HepG2 (cell line): ENCODE measurements at regions of chr2 and their contacts with region 1.

Region 1: DNA sequence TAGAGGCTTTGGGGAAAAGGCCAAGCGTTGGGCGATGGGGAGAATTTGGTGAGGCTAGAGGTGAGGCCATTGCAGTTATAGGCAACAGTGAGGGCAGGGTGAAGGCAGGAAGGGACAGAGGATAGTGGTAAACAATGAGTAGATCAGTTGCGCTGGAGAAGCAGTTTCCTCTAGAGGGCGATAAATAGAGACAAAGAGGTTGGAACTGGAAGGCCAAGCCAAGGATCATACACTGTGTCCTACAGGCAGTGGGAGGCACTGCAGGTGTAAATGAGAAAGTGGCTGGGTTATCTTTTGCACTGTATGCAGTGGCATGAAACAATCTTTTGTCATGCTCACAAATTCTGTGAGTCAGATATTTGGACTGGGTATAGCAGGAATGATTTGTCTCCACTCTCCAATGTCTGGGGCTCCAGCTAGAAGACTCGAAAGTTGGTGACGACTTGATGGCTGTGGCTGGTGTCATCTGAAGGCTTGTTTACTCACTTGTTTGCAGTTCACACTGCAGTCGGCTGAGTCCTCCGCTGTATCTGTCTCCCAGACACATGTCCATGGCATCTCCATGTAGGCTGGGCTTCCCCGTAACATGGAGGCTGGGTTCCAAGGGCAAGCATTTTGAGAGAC is 82.1 kb downstream of the TNP1 start:
- DNase-seq: peak; percentile 89
- ATAC-seq: peak; percentile 98
- H3K4me3 ChIP-seq: no peak overlapping the region
- H3K27ac ChIP-seq: no peak overlapping the region
- H3K4me1 ChIP-seq: peaks cover 16% of the 10 kb centered on the region
- H3K27me3 ChIP-seq: peaks cover 0 to 16% of the 10 kb centered on the region in 2 experiments; a peak in 2 of 5 replicates
- CTCF ChIP-seq: peak; percentile 88
- EP300 ChIP-seq: peak in 1 of 2 experiments; percentile 42; a peak in 1 of 4 replicates
- POLR2A ChIP-seq: no peak
- RAD21 ChIP-seq: peak; percentile 87

Region 2: DNA sequence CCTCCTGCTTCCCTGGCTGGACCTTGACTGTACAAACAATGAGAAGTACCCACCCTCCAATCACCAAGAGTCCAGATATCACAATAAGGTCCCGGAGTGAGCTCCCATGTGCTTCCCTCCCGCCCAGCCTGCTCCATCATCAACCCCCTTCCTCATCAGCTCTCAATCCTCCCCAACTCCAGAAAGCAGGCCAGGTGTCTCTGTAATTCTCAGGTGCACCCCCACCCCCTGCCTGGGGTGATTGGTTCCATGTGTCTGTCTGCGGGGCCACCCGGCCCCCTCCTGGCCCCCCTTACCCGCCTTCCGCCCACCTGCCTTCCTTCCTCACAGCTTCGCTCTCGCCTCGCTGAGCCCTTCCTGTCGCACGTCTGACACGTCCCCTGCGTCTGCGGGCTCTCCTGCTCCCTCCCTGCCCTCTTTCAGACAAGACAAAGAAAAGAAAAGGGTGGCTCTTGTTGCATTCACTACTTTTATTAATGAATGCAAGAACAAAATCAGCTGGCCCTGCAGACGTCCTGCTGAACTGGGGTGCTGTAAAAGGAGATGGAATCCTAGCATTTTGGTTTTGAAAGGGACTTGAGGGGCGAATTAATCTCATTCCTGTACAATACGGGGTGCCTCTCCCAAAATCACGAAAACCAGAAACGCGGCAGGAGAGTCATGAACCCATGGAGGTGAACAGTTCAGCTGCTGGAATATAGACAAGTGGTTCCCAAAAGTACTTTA is 171.0 kb before region 1 on chr2:
- CTCF ChIA-PET with region 1: no interaction called
- POLR2A ChIA-PET with region 1: no interaction called
- in situ Hi-C with region 1: no loop called
- intact Hi-C with region 1: no loop called
- DNase-seq: no peak
- ATAC-seq: peak; percentile 55; the same call in 2 of the 3 replicates
- H3K4me3 ChIP-seq: no peak overlapping the region
- H3K27ac ChIP-seq: no peak overlapping the region
- H3K4me1 ChIP-seq: peaks cover 18% of the 10 kb centered on the region
- H3K27me3 ChIP-seq: peaks cover 0 to 54% of the 10 kb centered on the region in 2 experiments; a peak in 3 of 5 replicates
- CTCF ChIP-seq: no peak
- EP300 ChIP-seq: no peak
- POLR2A ChIP-seq: no peak
- RAD21 ChIP-seq: no peak

Region 3: GRCh38 chr2:216651351-216651881 is 126.3 kb before region 1 on chr2:
- CTCF ChIA-PET with region 1: no interaction called
- POLR2A ChIA-PET with region 1: no interaction called
- in situ Hi-C with region 1: no loop called
- intact Hi-C with region 1: no loop called
- DNase-seq: no peak
- ATAC-seq: no peak
- H3K4me3 ChIP-seq: no peak overlapping the region
- H3K27ac ChIP-seq: no peak overlapping the region
- H3K4me1 ChIP-seq: peaks cover 56% of the 10 kb centered on the region
- H3K27me3 ChIP-seq: peaks cover 0 to under 1% of the 10 kb centered on the region in 2 experiments; a peak in 1 of 5 replicates
- CTCF ChIP-seq: no peak
- EP300 ChIP-seq: no peak
- POLR2A ChIP-seq: no peak
- RAD21 ChIP-seq: no peak

Region 4: GRCh38 chr2:216799873-216800431 is 22.2 kb after region 1 on chr2:
- CTCF ChIA-PET with region 1: no interaction called
- POLR2A ChIA-PET with region 1: no interaction called
- in situ Hi-C with region 1: no loop called
- intact Hi-C with region 1: no loop called
- DNase-seq: no peak
- ATAC-seq: no peak
- H3K4me3 ChIP-seq: no peak overlapping the region
- H3K27ac ChIP-seq: no peak overlapping the region
- H3K4me1 ChIP-seq: no peaks in the 10 kb centered on the region
- H3K27me3 ChIP-seq: 0 out of 5 replicates have a peak, but pooled peaks cover 0 to 5% of the 10 kb centered on the region in 2 experiments
- CTCF ChIP-seq: no peak
- EP300 ChIP-seq: no peak
- POLR2A ChIP-seq: no peak
- RAD21 ChIP-seq: no peak

Region 5: DNA sequence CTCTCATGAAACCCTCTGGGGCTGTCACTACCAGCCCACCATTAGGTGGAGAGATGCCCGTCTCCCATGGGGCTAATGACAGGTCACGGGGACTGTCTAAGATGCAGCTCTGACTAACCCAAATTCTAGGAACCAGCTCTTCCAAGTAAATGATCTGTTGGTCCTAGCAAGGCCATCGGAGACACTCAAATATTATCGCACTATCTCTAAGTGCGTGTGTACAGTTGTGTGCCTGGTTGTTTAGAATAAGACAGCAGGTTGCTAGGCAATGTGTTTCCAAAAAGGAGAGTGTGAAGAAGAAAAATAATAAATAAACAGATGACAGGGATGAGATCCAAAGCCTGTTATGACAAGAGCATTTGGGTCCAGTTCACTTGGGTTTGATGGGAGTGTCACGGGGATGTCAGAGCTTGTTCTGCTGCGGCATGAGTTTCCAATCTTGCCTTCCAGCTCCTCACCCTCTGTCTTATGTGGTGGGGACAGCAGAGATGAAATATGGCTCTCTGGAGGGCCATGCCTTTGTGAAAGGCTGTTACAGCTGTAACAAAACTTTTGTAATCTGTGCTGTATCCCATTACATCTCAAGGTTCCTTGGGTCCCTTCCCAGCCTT is 209.5 kb after region 1 on chr2:
- CTCF ChIA-PET with region 1: no interaction called
- POLR2A ChIA-PET with region 1: no interaction called
- in situ Hi-C with region 1: no loop called
- intact Hi-C with region 1: loop called (anchors 1 kb)
- DNase-seq: no peak
- ATAC-seq: no peak
- H3K4me3 ChIP-seq: no peak overlapping the region
- H3K27ac ChIP-seq: no peak overlapping the region
- H3K4me1 ChIP-seq: no peaks in the 10 kb centered on the region
- H3K27me3 ChIP-seq: peaks cover 0 to 8% of the 10 kb centered on the region in 2 experiments; a peak in 2 of 5 replicates
- CTCF ChIP-seq: no peak
- EP300 ChIP-seq: no peak
- POLR2A ChIP-seq: no peak
- RAD21 ChIP-seq: no peak

Region 6: GRCh38 chr2:217040099-217040498 is 262.3 kb after region 1 on chr2:
- CTCF ChIA-PET with region 1: no interaction called
- POLR2A ChIA-PET with region 1: no interaction called
- in situ Hi-C with region 1: no loop called
- intact Hi-C with region 1: loop called (anchors 5 kb)
- DNase-seq: no peak
- ATAC-seq: no peak
- H3K4me3 ChIP-seq: no peak overlapping the region
- H3K27ac ChIP-seq: no peak overlapping the region
- H3K4me1 ChIP-seq: no peaks in the 10 kb centered on the region
- H3K27me3 ChIP-seq: peaks cover 0 to 3% of the 10 kb centered on the region in 2 experiments; a peak in 1 of 5 replicates
- CTCF ChIP-seq: no peak
- EP300 ChIP-seq: no peak
- POLR2A ChIP-seq: no peak
- RAD21 ChIP-seq: no peak

Region 7: GRCh38 chr2:217142649-217143266 is 365.0 kb after region 1 on chr2:
- CTCF ChIA-PET with region 1: interaction called, 26 read pairs
- POLR2A ChIA-PET with region 1: no interaction called
- in situ Hi-C with region 1: no loop called
- intact Hi-C with region 1: loop called (anchors 1 kb)
- DNase-seq: peak; percentile 38
- ATAC-seq: peak; percentile 64
- H3K4me3 ChIP-seq: no peak overlapping the region
- H3K27ac ChIP-seq: no peak overlapping the region
- H3K4me1 ChIP-seq: no peaks in the 10 kb centered on the region
- H3K27me3 ChIP-seq: 0 out of 5 replicates have a peak, but pooled peaks cover 0 to under 1% of the 10 kb centered on the region in 2 experiments
- CTCF ChIP-seq: peak; percentile 76
- EP300 ChIP-seq: no peak
- POLR2A ChIP-seq: no peak
- RAD21 ChIP-seq: peak; percentile 55; the same call in 1 of the 2 replicates